SK-N-SH (cell line): ENCODE measurements at regions of chr2 and their contacts with region 1.

Region 1: GRCh38 chr2:177489719-177490301 is 97.2 kb downstream of the AGPS start:
- DNase-seq: peak; percentile 58
- H3K4me3 ChIP-seq: no peak overlapping the region
- H3K27ac ChIP-seq: 0 out of 4 replicates have a peak overlapping the region, but pooled peaks of 1 of the 2 experiments have one; percentile 14
- H3K4me1 ChIP-seq: no peaks in the 10 kb centered on the region; a peak in 1 of 4 replicates
- H3K27me3 ChIP-seq: no peaks in the 10 kb centered on the region
- CTCF ChIP-seq: peak; percentile 75
- EP300 ChIP-seq: no peak
- RAD21 ChIP-seq: peak; percentile 90

Region 2: DNA sequence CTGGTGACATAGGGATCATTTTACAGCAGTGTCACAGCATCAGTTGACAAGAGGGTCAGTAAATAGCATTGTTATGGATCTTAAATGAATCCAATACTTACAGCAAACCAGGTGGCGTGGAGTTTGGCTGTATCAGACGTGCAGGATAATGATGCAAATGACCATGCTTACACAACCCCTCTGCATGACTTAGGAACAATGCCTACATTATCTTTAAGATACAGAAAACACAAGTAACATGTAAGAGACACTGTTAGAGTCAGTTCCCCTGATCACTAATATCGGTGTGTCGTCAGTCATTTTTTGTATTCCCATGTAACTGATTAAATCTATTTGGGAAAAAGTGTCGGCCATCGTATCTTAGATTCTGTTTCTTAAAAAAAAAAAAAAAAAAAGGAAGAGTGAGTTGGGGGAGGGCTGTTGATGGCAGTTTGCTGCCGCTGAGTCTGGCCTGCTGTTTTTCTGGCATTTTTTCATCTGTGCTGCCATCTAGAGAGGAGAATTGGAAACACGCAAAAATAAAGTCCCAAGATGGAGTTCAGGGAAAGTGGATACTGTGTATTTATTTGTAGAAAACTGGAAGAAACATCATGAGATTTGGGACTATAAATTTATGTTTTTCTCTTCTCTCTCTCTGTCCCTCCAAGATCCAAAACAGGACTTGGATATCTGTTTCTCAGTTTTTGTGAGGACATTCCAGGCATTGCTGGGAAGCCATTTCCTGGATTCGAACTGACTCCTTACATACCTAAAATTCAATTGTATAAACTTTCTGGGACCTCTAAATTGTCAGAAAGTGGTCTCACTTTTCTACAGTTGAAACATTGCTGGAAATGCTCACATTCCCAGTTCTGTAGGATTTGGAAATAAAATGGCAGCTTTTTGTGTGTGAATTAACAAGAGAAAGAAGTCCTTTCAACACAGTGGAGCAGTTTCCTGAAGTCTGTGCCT is 157.5 kb before region 1 on chr2:
- CTCF ChIA-PET with region 1: interaction called, 16 read pairs
- POLR2A ChIA-PET with region 1: no interaction called
- DNase-seq: peak; percentile 46
- H3K4me3 ChIP-seq: no peak overlapping the region; a peak in 1 of 4 replicates
- H3K27ac ChIP-seq: peak overlapping the region; percentile 58 to 67
- H3K4me1 ChIP-seq: peaks cover 3 to 13% of the 10 kb centered on the region in 2 experiments; a peak in 3 of 4 replicates
- H3K27me3 ChIP-seq: no peaks in the 10 kb centered on the region
- CTCF ChIP-seq: peak; percentile 75
- EP300 ChIP-seq: no peak
- RAD21 ChIP-seq: peak; percentile 87

Region 3: GRCh38 chr2:177506506-177506905 is 16.7 kb after region 1 on chr2:
- CTCF ChIA-PET with region 1: interaction called, 17 read pairs
- POLR2A ChIA-PET with region 1: no interaction called
- DNase-seq: no peak
- H3K4me3 ChIP-seq: no peak overlapping the region
- H3K27ac ChIP-seq: no peak overlapping the region; a peak in 1 of 4 replicates
- H3K4me1 ChIP-seq: no peaks in the 10 kb centered on the region; a peak in 1 of 4 replicates
- H3K27me3 ChIP-seq: no peaks in the 10 kb centered on the region
- CTCF ChIP-seq: no peak
- EP300 ChIP-seq: no peak
- RAD21 ChIP-seq: no peak

Region 4: GRCh38 chr2:177535956-177536504 is 46.2 kb after region 1 on chr2:
- CTCF ChIA-PET with region 1: interaction called, 18 read pairs
- POLR2A ChIA-PET with region 1: no interaction called
- DNase-seq: no peak
- H3K4me3 ChIP-seq: no peak overlapping the region
- H3K27ac ChIP-seq: peak overlapping the region in 1 of 2 experiments; percentile 36; a peak in 1 of 4 replicates
- H3K4me1 ChIP-seq: peaks cover 0 to 2% of the 10 kb centered on the region in 2 experiments; a peak in 2 of 4 replicates
- H3K27me3 ChIP-seq: no peaks in the 10 kb centered on the region
- CTCF ChIP-seq: no peak
- EP300 ChIP-seq: no peak
- RAD21 ChIP-seq: no peak

Region 5: DNA sequence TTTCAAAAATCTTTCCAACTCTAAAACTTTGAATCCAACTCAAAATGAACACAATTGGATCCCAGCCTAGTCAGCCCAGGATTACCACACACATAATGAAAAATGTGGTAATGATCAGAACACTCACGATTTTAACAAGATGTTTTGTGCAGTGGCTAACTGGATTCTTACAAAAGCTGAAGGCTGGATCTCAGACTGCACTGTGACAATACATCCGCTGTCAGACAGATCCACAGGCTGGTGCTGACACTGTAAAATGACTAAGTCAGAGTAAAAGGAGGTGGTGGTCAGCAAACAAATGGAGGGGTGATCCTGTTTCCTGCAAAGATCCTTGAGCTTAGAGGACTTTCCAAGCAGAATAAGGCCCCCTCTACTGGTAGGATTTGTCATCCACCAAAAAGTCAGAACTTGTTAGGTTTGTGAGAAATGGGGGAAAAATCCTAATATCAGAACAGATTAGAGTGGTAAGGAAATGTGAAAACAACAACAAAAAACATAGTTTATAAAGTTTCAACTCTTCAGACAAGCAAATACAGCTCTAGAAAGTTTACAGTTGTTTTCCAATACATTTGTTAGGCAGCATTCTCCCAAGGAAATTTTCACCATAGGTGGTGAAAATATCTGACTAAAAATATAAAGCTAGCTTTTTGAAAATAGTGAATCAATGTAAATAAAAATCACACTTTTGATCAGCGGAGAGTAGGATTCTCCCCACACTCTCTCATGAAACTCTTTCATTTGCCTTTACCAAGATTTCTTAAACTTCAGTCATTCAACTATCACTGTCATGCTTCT is 114.7 kb after region 1 on chr2:
- CTCF ChIA-PET with region 1: interaction called, 75 read pairs
- POLR2A ChIA-PET with region 1: no interaction called
- DNase-seq: peak; percentile 50
- H3K4me3 ChIP-seq: no peak overlapping the region; a peak in 1 of 4 replicates
- H3K27ac ChIP-seq: no peak overlapping the region; a peak in 1 of 4 replicates
- H3K4me1 ChIP-seq: peaks cover 2 to 9% of the 10 kb centered on the region in 2 experiments; a peak in 2 of 4 replicates
- H3K27me3 ChIP-seq: no peaks in the 10 kb centered on the region; the same call in 1 of the 2 replicates
- CTCF ChIP-seq: peak; percentile 72
- EP300 ChIP-seq: no peak
- RAD21 ChIP-seq: peak; percentile 79

Region 6: DNA sequence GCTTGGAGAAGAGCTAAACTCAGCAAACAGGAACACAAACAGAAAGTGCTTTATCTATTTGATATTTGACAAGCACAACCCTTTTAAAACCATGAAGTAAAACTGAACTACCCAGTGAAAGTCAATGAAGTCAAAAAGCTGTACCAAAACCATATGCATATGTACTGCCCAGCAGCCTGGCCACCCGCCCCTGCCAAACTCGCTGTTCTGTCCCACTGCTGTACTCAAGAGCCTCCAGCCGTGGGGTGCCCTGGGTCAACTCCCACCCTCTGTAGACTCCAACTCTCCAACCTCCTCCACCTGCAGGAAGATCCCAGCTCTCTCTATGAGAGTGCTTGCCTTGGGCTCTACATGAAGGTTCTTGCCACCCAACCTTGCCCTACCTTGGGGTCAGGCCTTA is 170.9 kb after region 1 on chr2:
- CTCF ChIA-PET with region 1: interaction called, 12 read pairs
- POLR2A ChIA-PET with region 1: no interaction called
- DNase-seq: no peak
- H3K4me3 ChIP-seq: no peak overlapping the region
- H3K27ac ChIP-seq: no peak overlapping the region
- H3K4me1 ChIP-seq: peaks cover 0 to 7% of the 10 kb centered on the region in 2 experiments; a peak in 3 of 4 replicates
- H3K27me3 ChIP-seq: no peaks in the 10 kb centered on the region
- CTCF ChIP-seq: no peak
- EP300 ChIP-seq: no peak
- RAD21 ChIP-seq: no peak